Endothelial cell of umbilical vein (primary cell): ENCODE measurements at regions of chr22 and their contacts with region 1.

Region 1: DNA sequence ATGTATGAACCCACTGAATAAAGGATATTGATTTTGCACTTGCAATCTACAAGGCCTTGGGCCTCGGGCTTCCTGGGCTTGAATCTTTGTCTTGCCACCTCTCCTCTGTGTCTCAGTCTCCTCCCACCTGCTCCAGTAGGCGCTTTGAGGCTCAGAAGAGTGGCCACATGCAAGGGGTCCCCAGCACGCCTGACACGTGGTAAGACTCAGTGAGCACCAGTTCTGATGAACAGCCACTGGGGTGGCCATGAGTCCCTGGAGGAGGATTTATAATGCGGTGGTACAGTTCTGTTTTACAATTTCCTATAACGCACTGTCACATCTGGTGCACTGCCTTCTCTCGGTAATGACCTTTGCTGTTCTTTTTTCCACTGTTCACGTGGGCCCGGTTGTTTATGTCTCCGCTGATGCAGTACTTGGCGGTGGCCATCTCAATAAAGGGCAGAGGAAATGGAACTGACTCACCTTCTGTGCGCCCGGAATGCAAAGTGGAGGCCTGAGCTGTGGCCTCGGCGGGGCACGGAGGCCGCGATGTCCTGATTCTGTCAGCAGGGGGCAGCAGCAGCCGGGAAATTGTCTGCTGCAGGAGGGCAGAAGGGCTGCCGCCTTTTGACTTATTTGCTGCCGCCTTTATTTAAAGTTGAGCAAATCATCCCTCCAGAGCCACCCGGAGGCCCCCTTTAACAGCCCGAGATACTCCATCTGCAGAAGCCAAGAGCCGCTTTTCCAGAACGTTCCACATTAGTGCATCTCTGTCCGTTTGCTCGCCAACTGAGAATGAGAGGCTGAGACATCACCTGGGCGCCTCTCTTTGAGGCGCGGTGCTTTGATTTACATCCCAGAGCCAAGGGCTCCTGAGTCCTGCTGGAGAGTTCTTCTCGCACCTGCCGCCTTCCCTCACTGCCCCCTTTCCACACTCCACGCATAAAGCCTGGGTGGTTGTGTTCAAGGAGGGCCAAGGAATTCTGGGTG is 6.0 kb upstream of the IFT27 start:
- DNase-seq: peak; percentile 95
- H3K4me3 ChIP-seq: no peak overlapping the region
- H3K27ac ChIP-seq: peak overlapping the region; percentile 62
- H3K4me1 ChIP-seq: peaks cover 4% of the 10 kb centered on the region
- H3K27me3 ChIP-seq: peaks cover 3 to 8% of the 10 kb centered on the region in 2 experiments
- CTCF ChIP-seq: peak; percentile 93 to 98
- POLR2A ChIP-seq: no peak

Region 2: DNA sequence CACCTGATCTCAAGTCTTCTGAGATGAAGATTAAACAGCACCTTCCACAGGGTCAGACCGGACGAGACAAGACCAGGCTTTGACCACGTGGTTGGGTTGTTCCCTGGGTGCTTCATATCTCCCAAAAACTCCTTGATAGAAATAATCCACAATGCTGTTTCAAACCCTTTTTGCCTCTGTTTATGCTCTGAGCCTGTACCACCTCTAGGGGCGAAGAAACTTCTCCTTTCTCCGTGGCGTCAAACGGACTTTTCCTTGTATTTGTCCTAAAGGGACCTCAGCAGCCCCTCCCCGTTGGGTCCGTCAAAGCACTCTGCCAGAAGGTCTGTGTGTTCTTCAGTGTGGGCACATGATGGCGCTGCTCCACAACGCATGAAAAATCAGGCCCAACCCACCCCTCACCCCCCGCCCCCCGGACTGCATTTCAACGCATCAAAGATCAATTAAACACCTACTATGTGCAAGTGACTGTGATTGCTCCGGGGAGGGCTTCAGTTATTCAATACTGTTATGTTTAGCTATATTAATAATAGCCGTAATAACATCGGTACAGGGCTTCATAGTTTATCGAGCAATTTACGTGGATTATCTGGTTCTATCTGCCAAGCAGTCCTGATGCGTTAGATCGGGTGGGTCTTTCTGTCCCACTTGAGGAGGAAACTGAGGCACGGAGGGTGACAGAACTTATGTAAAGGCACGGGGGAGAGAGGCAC is 235.7 kb before region 1 on chr22:
- CTCF ChIA-PET with region 1: interaction called, 8 read pairs
- POLR2A ChIA-PET with region 1: interaction called, 4 read pairs
- dilution Hi-C with region 1: no loop called
- intact Hi-C with region 1: loop called (anchors 1 kb)
- DNase-seq: peak; percentile 54
- H3K4me3 ChIP-seq: no peak overlapping the region
- H3K27ac ChIP-seq: no peak overlapping the region
- H3K4me1 ChIP-seq: peaks cover 23% of the 10 kb centered on the region
- H3K27me3 ChIP-seq: peaks cover 2 to 4% of the 10 kb centered on the region in 2 experiments
- CTCF ChIP-seq: peak; percentile 45 to 68
- POLR2A ChIP-seq: no peak

Region 3: DNA sequence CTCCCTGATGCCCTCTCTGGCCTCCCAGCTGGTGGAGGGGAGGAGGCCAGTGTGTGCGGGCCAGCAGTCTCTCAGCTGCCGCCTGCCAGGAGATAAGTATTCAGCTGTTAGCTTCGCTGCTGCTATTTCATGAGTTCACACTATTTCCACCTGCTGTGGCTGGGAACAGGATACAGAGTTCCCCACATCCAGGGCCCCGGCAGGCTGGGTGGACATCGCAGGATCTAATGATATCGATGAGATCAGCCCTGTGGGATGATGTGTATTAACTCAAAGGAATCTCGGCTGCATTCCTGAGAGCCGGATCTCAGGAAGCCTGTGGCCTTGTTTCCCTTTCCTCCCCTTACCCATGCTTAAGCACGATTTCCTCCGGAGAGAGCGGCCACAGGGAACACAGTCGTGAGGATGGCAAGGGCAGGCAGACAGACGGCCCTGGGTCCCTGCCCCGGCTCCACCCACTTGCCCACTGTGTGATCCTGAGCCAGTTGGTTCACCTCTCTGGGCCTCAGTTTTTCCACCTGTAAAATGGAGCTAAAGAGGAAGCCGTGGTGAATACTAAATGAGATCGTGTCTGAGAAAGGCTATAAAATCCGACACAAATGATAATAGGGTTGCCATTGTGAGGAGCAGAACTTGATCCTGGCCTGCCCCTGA is 41.4 kb after region 1 on chr22:
- CTCF ChIA-PET with region 1: interaction called, 12 read pairs
- POLR2A ChIA-PET with region 1: no interaction called
- dilution Hi-C with region 1: no loop called
- intact Hi-C with region 1: loop called (anchors 1 kb)
- DNase-seq: peak; percentile 71
- H3K4me3 ChIP-seq: no peak overlapping the region
- H3K27ac ChIP-seq: peak overlapping the region; percentile 18
- H3K4me1 ChIP-seq: peaks cover 9% of the 10 kb centered on the region
- H3K27me3 ChIP-seq: peaks cover 7% of the 10 kb centered on the region in 2 experiments
- CTCF ChIP-seq: no peak
- POLR2A ChIP-seq: no peak

Region 4: DNA sequence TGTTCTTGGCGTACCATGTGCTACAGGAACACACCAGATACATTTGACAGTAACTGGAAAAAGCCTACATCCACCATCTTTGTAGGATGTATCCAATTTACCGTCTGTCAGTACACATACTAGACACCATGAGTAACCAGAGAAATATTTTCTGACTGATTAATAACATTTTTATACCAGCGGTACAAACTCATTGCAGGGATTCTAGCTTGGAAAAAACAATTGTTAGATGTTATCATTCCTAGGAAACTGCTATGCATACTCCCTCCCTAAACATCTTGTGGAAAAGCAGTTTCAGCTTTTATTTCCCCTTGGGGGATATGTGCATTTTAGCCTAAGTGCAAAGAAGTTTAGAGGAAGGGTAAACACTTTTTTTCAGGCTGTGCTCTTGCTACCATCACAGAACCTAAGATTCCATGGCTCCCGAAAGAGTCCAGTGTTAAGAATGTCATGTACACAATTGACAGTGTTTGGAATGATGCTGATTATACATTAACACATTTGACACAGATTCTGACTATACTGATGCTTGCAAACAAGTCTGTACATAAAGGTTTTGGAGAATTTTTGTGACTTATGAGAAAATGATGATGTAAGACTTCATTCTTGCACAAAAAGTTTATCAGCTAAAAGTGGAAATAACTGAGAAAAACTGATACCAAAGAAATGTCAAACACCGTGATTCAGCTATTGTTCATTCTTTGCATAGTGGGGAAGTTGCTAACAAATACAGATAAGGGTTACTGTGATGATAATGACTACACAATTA is 102.6 kb after region 1 on chr22:
- CTCF ChIA-PET with region 1: no interaction called
- POLR2A ChIA-PET with region 1: no interaction called
- dilution Hi-C with region 1: no loop called
- intact Hi-C with region 1: no loop called
- DNase-seq: peak; percentile 88
- H3K4me3 ChIP-seq: peak overlapping the region in 1 of 3 experiments; percentile 7
- H3K27ac ChIP-seq: peak overlapping the region; percentile 87
- H3K4me1 ChIP-seq: peaks cover 46% of the 10 kb centered on the region
- H3K27me3 ChIP-seq: no peaks in the 10 kb centered on the region
- CTCF ChIP-seq: no peak
- POLR2A ChIP-seq: peak; percentile 51